Activated T-helper 1 cell treated with anti-CD3 and anti-CD28 coated beads, Interleukin-12 subunit alpha, Interleukin-12 subunit beta, Interleukin-2, Interleukin-4 antibody, amounts not matched to agents 30 ng/mL and 10 ng/mL and 1 ng/mL, durations not matched to agents 14 hours and 24 hours and 36 hours (primary cell): ENCODE measurements at regions of chr2 and their contacts with region 1.

Region 1: DNA sequence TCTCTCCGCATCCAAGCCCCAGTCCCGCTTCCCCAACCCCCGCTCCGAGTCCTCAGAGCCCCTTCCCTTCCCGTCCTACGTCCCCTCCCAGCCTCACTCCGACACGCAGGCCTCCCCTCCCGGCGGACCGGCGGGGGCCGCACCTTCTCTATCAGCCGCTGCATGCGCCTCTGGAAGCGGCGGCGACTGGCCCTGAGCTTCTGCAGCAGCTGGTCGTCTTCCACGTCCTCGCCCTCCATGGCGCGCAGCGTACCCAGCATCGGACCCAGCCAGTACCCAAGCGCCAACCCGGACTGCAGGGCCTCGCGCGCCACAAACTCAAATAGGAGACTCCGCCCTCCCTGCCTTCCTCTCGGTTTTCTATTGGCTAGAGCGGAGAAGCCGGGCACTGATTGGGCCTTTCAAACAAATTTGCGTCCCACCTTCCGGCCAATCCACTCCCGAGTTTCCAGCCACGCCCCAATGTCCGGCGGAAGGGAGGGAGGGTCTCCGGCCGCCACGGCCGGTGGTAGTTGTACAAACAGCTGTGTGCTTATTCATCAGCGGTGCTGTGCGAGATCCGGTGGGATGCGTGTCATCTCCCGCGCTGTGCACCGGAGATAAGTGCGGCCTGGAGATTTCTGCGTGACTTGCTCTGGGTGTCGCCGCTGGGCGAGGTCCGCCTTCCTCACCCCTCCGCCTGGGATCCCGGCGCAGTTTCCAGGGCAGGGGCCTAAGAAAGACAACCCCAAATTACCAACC is at the start of gene HJURP:
- DNase-seq: peak; percentile 95
- H3K4me3 Mint-ChIP-seq: peak within 1 kb of the TSS; percentile 94
- H3K27ac Mint-ChIP-seq: peak within 1 kb of the TSS; percentile 97
- H3K4me1 Mint-ChIP-seq: peaks cover 63% of the 10 kb centered on the region
- H3K27me3 Mint-ChIP-seq: no peaks in the 10 kb centered on the region
- total RNA-seq, gene HJURP: 38.2 and 40.4 TPM in 2 replicates

Region 2: GRCh38 chr2:232697100-232697865 is 1157.1 kb before region 1 on chr2 and contains the start of gene GIGYF2:
- intact Hi-C with region 1: loop called (anchors 5 kb)
- DNase-seq: peak; percentile 90
- H3K4me3 Mint-ChIP-seq: peak within 1 kb of the TSS; percentile 99
- H3K27ac Mint-ChIP-seq: peak within 1 kb of the TSS; percentile 87
- H3K4me1 Mint-ChIP-seq: peaks cover 30% of the 10 kb centered on the region
- H3K27me3 Mint-ChIP-seq: no peaks in the 10 kb centered on the region
- total RNA-seq, gene GIGYF2: 71.1 and 74.6 TPM in 2 replicates

Region 3: GRCh38 chr2:233867993-233868532 is 13.7 kb after region 1 on chr2 and contains the start of gene MSL3B:
- intact Hi-C with region 1: loop called (anchors 1 kb)
- DNase-seq: peak; percentile 55
- H3K4me3 Mint-ChIP-seq: peak within 1 kb of the TSS; percentile 93
- H3K27ac Mint-ChIP-seq: peak within 1 kb of the TSS; percentile 92
- H3K4me1 Mint-ChIP-seq: peaks cover 24% of the 10 kb centered on the region
- H3K27me3 Mint-ChIP-seq: peaks cover 27% of the 10 kb centered on the region

Region 4: DNA sequence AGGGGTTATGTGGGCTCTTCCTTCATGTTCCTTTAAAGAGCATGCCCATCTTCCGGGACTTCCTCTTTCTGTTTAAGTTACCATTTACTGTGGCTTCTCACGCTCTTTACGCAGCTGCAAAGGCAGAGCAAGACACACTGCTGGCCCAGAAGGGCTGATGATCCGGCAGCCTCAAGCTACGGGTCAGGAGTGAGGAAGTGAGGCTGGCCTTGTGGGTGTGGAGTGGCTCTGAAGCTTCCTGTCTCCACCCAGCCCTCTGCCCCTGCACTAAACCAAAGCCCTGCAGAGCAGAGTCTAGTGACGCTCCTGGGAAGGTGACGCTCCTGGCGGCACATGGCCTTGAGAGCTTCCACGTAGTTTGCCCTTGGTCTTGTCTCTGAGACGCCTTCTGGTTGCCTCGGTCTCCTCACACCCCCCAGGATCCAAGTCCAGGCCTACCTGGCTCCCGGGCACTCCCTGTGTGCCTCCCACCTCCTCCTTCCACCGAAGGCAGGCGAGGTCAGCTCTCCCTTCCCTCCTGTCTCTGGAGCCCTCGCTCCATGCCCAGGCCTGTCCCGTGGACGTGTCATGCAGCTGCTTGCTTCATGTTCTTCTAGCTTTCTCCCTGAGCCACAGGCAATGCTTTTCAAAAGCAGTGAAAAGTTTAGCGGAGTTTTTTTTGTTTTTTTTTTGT is 592.1 kb after region 1 on chr2:
- intact Hi-C with region 1: loop called (anchors 1 kb)
- DNase-seq: peak; percentile 87
- H3K4me3 Mint-ChIP-seq: peak overlapping the region; percentile 75
- H3K27ac Mint-ChIP-seq: peak overlapping the region; percentile 99
- H3K4me1 Mint-ChIP-seq: peaks cover 88% of the 10 kb centered on the region
- H3K27me3 Mint-ChIP-seq: no peaks in the 10 kb centered on the region